Aorta (tissue), 5 donors: ENCODE measurements at regions of chr2 and their contacts with region 1.

Region 1: DNA sequence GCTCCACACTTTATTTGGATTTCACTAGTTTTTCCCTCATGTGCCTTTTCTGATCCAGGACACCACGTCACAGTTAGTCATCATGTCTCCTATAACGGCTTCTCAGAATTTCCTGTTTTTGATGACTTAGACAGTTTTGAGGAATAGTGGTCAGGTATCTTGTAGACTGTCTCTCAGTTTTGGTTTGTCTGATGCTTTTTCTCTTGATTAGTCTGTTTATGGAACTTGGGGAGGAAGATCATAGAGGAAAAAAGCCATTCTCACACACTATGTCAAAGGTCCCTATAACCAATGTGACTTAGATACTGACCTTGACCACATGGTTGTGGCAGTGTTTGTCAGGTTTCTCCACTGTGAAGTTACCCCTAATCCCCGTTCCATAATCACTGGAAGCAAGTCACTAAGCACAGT is 89.0 kb downstream of the RAPH1 start:
- DNase-seq: no peak
- ATAC-seq: no peak
- H3K4me3 ChIP-seq: no peak overlapping the region
- H3K27ac ChIP-seq: no peak overlapping the region
- H3K4me1 ChIP-seq: no peaks in the 10 kb centered on the region
- H3K27me3 ChIP-seq: no peaks in the 10 kb centered on the region

Region 2: GRCh38 chr2:202335791-202336467 is 1110.1 kb before region 1 on chr2:
- intact Hi-C with region 1: no loop called
- DNase-seq: no peak
- ATAC-seq: no peak
- H3K4me3 ChIP-seq: no peak overlapping the region
- H3K27ac ChIP-seq: no peak overlapping the region
- H3K4me1 ChIP-seq: no peaks in the 10 kb centered on the region
- H3K27me3 ChIP-seq: no peaks in the 10 kb centered on the region

Region 3: GRCh38 chr2:203327901-203328759 is 117.9 kb before region 1 on chr2 and contains the start of gene ABI2:
- intact Hi-C with region 1: loop called in 1 of 2 experiments (anchors 10 kb)
- DNase-seq: peak; percentile 89 to 95
- ATAC-seq: peak; percentile 95
- H3K4me3 ChIP-seq: peak within 1 kb of the TSS; percentile 95 to 98
- H3K27ac ChIP-seq: peak within 1 kb of the TSS; percentile 44 to 62
- H3K4me1 ChIP-seq: no peaks in the 10 kb centered on the region
- H3K27me3 ChIP-seq: no peaks in the 10 kb centered on the region
- total RNA-seq, gene ABI2: 61.4 to 67.6 TPM

Region 4: GRCh38 chr2:203535078-203535783 is 89.2 kb after region 1 on chr2 and contains the start of gene RAPH1:
- intact Hi-C with region 1: no loop called
- DNase-seq: peak; percentile 93 to 96
- ATAC-seq: peak; percentile 90
- H3K4me3 ChIP-seq: peak within 1 kb of the TSS; percentile 91 to 98
- H3K27ac ChIP-seq: peak within 1 kb of the TSS; percentile 30 to 91
- H3K4me1 ChIP-seq: peaks cover 0 to 5% of the 10 kb centered on the region in 2 donors
- H3K27me3 ChIP-seq: no peaks in the 10 kb centered on the region
- total RNA-seq, gene RAPH1: 62.0 to 74.2 TPM